HEK293 (cell line): ENCODE measurements at regions of chr6 and their contacts with region 1.

Region 1: DNA sequence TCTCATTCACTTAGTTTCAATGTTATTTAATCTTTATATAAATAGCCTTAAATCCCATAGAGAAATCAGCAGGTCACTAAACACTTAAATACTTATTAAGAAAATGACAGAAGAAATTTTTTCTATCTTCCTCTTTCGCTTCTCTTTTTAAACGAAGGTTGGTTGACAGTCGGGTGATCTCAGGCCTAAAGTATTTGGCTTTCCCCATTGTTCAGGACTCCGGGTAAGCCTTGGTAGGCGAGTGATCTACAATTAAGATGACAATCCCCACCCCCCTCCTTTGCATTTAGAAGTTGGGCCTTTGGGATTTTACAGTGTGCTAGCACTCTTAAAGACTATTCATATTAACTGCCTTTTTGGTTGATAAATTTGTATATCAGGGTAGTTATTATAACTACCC is 19.7 kb upstream of the UTRN start:
- H3K4me3 ChIP-seq: no peak overlapping the region
- H3K27ac ChIP-seq: no peak overlapping the region
- H3K4me1 ChIP-seq: peaks cover 21% of the 10 kb centered on the region
- CTCF ChIP-seq: no peak

Region 2: DNA sequence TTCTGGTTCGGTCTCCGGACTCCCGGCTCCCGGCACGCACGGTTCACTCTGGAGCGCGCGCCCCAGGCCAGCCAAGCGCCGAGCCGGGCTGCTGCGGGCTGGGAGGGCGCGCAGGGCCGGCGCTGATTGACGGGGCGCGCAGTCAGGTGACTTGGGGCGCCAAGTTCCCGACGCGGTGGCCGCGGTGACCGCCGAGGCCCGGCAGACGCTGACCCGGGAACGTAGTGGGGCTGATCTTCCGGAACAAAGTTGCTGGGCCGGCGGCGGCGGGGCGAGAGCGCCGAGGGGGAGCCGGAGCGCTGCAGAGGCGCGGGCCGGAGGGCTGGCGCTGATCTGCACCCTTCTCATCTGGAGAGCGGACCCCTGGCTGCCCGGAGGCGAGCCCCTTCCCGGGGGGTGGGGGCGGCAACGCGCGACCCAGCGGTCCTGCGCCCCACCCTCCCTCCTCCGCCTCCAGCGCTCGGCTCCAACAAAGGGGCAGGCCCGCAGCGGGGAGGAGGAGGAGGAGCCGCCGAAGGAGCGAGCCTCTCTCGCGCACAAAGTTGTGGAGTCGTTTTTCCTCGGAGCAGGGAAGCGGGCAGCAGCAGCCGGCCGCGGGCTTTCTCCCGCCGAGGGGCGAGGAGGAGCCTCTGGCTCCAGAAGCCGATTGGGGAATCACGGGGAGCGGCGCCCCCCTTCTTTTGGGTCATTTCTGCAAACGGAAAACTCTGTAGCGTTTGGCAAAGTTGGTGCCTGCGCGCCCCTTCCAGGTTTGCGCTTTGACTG is 19.6 kb after region 1 on chr6 and contains the start of gene UTRN:
- CTCF ChIA-PET with region 1: no interaction called
- POLR2A ChIA-PET with region 1: interaction called, 28 read pairs
- H3K4me3 ChIP-seq: peak within 1 kb of the TSS; percentile 86
- H3K27ac ChIP-seq: peak within 1 kb of the TSS; percentile 99
- H3K4me1 ChIP-seq: peaks cover 9% of the 10 kb centered on the region; the same call in 1 of the 2 replicates
- CTCF ChIP-seq: peak; percentile 70; the same call in 1 of the 2 replicates

Region 3: GRCh38 chr6:144321839-144322591 is 56.6 kb after region 1 on chr6:
- CTCF ChIA-PET with region 1: no interaction called
- POLR2A ChIA-PET with region 1: no interaction called
- H3K4me3 ChIP-seq: no peak overlapping the region
- H3K27ac ChIP-seq: no peak overlapping the region
- H3K4me1 ChIP-seq: peaks cover 10% of the 10 kb centered on the region
- CTCF ChIP-seq: no peak

Region 4: GRCh38 chr6:144411332-144412190 is 146.2 kb after region 1 on chr6:
- CTCF ChIA-PET with region 1: no interaction called
- POLR2A ChIA-PET with region 1: no interaction called
- H3K4me3 ChIP-seq: no peak overlapping the region
- H3K27ac ChIP-seq: no peak overlapping the region; the same call in 1 of the 2 replicates
- H3K4me1 ChIP-seq: peaks cover 15% of the 10 kb centered on the region
- CTCF ChIP-seq: no peak